Left cardiac atrium (tissue), 4 donors: ENCODE measurements at regions of chr5 and their contacts with region 1.

Region 1: DNA sequence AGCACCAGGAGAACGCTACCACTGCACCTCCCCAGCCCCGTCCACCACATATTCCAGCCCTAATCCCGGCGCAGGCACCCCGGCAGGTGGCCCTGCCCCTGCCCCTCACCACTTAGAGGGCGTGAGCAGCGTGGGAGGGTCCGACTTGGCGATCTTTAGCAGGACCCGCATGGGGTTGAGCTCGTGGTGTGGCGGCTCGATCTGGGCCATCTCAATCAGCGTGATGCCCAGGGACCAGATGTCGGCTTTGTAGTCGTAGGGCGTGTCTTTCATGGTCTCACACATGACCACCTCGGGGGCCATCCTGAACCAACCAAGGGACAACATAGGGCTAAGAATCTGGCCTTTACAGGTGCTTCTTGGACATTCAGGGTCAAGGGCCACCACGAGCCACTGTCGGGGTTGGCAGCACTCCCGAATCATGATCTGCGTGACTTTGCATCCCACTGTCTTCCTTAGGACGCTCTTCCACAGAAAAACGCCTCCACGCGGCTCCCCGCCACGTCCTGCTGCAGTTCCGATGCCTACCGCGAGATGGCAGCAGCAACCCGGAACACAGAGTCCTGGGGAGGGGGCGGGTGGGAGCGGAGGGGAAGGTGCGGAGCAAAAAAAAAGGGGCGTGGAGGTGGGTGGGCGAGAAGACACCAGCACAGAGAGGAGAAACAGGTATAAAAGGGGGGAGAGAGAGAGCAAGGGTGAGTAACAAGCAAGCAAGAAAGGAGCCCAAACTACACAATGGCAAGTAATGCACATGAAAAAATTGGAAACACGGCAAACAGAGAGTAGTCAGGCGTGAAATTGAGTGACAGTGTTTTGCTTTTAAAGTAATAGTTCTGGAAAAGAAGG is 81.3 kb downstream of the STK10 start:
- DNase-seq: peak; percentile 62
- ATAC-seq: peak; percentile 5 to 31

Region 2: DNA sequence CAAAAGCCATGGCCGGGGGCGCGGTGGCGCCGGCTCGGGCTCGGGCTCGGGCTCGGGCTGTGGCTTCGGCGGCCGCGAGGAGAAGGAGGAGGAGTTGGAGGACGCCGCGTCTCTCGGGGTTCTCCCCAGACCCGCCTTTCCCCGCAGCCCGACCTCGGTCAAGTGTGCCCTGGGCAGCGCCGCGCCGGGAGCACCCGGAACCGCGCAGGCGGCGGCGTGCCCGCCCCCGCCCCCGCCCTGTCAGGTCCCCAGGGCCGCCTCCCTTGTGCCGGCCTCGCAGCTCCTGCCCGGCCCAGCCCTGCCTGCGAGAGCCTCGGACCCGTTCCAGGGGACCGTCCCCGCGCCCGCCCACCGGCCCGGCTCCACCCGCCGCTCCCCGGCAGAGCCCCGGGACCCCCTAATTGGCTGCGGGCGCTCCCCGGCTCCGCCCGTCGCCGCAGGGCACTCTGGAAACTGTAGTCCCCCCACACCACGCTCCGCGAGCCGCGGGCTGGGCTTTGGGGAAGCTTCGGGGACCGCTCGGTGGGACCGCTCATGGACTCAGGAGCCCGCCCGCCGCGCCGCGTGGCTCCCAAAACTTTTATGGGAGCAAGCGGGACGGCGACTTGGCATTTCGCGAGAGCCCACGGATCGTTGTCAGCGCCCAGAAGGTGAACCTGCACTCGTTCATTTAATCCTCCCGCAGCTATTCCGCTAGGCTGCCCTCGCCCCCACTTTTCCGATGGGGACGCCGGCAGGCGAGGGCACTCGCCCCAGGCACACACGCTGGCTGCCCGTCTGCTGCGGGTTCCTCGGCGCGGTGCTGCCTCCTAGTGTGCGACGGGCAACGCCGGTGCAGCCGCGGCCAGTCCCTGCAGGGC is 81.5 kb after region 1 on chr5 and contains the start of gene STK10:
- intact Hi-C with region 1: loop called (anchors 2 to 5 kb)
- DNase-seq: peak; percentile 95
- ATAC-seq: peak; percentile 95 to 96
- total RNA-seq, gene STK10: 15.4 to 18.1 TPM

Region 3: GRCh38 chr5:172293054-172293744 is 186.5 kb after region 1 on chr5:
- intact Hi-C with region 1: loop called (anchors 5 kb)
- DNase-seq: peak; percentile 63
- ATAC-seq: peak; percentile 96 to 97